ENCODE measurements at regions of chr4 and their contacts with region 1.

Region 1: GRCh38 chr4:103204111-103204510 is 6.0 kb upstream of the CENPE start:
- DNase-seq: peak; percentile 4
- H3K4me3 Mint-ChIP-seq: no peak overlapping the region
- H3K27ac Mint-ChIP-seq: no peak overlapping the region
- H3K4me1 Mint-ChIP-seq: peaks cover 26% of the 10 kb centered on the region
- H3K27me3 Mint-ChIP-seq: no peaks in the 10 kb centered on the region
- CTCF ChIP-seq: no peak

Region 2: GRCh38 chr4:103126126-103126525 is 78.0 kb before region 1 on chr4:
- CTCF ChIA-PET with region 1: no interaction called
- intact Hi-C with region 1: no loop called
- DNase-seq: no peak
- H3K4me3 Mint-ChIP-seq: no peak overlapping the region
- H3K27ac Mint-ChIP-seq: no peak overlapping the region
- H3K4me1 Mint-ChIP-seq: no peaks in the 10 kb centered on the region
- H3K27me3 Mint-ChIP-seq: no peaks in the 10 kb centered on the region
- CTCF ChIP-seq: no peak

Region 3: GRCh38 chr4:103156106-103156505 is 48.0 kb before region 1 on chr4:
- CTCF ChIA-PET with region 1: no interaction called
- intact Hi-C with region 1: no loop called
- DNase-seq: no peak
- H3K4me3 Mint-ChIP-seq: no peak overlapping the region
- H3K27ac Mint-ChIP-seq: no peak overlapping the region
- H3K4me1 Mint-ChIP-seq: no peaks in the 10 kb centered on the region
- H3K27me3 Mint-ChIP-seq: no peaks in the 10 kb centered on the region
- CTCF ChIP-seq: no peak

Region 4: DNA sequence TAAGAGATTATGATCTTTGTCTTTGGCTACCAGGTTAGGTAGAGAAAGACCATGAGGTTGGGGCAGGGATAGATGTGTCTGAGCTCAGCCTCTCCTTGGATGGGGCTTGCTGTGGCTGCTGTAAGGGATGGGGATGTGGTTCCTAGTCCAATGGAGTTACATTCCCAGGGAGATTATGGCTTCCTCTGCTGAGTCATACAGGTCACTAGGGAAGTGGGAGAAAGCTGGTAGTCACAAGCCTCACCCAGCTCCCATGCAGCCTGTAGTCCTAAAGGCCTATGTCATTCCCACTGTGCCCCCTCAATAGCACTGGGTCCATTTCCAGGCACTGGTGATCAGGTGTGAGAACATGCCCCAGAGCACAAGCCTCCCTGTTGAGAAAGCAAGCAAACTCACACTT is 64.6 kb after region 1 on chr4:
- CTCF ChIA-PET with region 1: no interaction called
- intact Hi-C with region 1: no loop called
- DNase-seq: no peak
- H3K4me3 Mint-ChIP-seq: no peak overlapping the region
- H3K27ac Mint-ChIP-seq: no peak overlapping the region
- H3K4me1 Mint-ChIP-seq: no peaks in the 10 kb centered on the region
- H3K27me3 Mint-ChIP-seq: no peaks in the 10 kb centered on the region
- CTCF ChIP-seq: no peak

Region 5: GRCh38 chr4:103306828-103307375 is 102.8 kb after region 1 on chr4:
- CTCF ChIA-PET with region 1: no interaction called
- intact Hi-C with region 1: loop called (anchors 10 kb)
- DNase-seq: peak; percentile 55
- H3K4me3 Mint-ChIP-seq: peak overlapping the region; percentile 26
- H3K27ac Mint-ChIP-seq: no peak overlapping the region
- H3K4me1 Mint-ChIP-seq: peaks cover 33% of the 10 kb centered on the region
- H3K27me3 Mint-ChIP-seq: no peaks in the 10 kb centered on the region
- CTCF ChIP-seq: no peak

Region 6: DNA sequence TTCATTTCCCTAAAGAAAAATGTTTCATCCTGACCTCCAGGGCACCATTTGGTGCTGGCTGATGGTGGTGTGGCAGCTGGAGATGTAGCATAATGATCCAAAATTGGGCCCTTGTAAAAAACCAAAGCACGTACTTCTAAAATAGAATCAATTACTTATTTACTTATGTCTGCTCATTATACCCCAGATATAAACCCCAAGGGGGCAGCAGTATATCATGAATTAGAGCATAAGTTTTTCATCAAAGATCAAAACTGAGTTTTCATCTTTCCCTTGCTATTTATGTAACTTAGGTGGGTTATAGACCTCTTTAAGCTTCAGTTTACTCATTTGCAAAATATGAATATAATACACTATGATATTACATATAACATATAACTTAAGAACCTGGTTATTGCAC is 274.6 kb after region 1 on chr4:
- CTCF ChIA-PET with region 1: no interaction called
- intact Hi-C with region 1: loop called (anchors 10 kb)
- DNase-seq: no peak
- H3K4me3 Mint-ChIP-seq: no peak overlapping the region
- H3K27ac Mint-ChIP-seq: no peak overlapping the region
- H3K4me1 Mint-ChIP-seq: no peaks in the 10 kb centered on the region
- H3K27me3 Mint-ChIP-seq: no peaks in the 10 kb centered on the region
- CTCF ChIP-seq: no peak

Region 7: GRCh38 chr4:103786014-103786413 is 581.9 kb after region 1 on chr4:
- CTCF ChIA-PET with region 1: interaction called, 3 read pairs
- intact Hi-C with region 1: loop called (anchors 1 kb)
- DNase-seq: peak; percentile 2
- H3K4me3 Mint-ChIP-seq: no peak overlapping the region
- H3K27ac Mint-ChIP-seq: no peak overlapping the region
- H3K4me1 Mint-ChIP-seq: no peaks in the 10 kb centered on the region
- H3K27me3 Mint-ChIP-seq: no peaks in the 10 kb centered on the region
- CTCF ChIP-seq: peak; percentile 49

Region 8: DNA sequence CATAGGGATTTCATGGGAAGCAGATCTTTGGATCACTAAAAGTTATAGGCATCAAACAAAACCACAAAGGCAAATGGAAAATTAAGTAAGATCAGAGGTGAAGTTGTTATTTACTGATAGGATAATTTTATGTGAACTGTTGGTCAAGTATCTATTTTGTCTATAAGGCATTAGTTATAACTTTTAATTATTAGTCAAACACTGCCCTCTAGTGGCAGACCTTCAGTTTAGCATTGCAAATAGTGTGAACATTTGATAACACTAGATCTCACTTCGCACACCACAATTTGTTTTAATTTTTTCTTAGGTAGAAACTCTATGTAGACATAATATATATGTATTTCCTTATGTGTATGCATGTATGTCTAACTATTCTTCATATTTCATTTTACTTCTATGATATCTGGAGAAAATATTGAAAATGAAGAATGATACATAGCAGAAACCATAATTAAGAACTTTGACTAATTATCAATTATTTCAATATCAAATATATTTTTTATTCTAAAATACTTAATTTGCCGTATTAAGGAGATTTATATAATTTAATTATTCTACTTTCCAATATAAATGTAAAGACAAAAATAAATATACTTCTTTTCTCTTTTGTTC is 730.2 kb after region 1 on chr4:
- CTCF ChIA-PET with region 1: no interaction called
- intact Hi-C with region 1: loop called (anchors 1 kb)
- DNase-seq: peak; percentile 16
- H3K4me3 Mint-ChIP-seq: no peak overlapping the region
- H3K27ac Mint-ChIP-seq: no peak overlapping the region
- H3K4me1 Mint-ChIP-seq: no peaks in the 10 kb centered on the region
- H3K27me3 Mint-ChIP-seq: no peaks in the 10 kb centered on the region
- CTCF ChIP-seq: no peak

Region 9: GRCh38 chr4:104146048-104146447 is 941.9 kb after region 1 on chr4:
- CTCF ChIA-PET with region 1: no interaction called
- intact Hi-C with region 1: no loop called
- DNase-seq: no peak
- H3K4me3 Mint-ChIP-seq: no peak overlapping the region
- H3K27ac Mint-ChIP-seq: no peak overlapping the region
- H3K4me1 Mint-ChIP-seq: no peaks in the 10 kb centered on the region
- H3K27me3 Mint-ChIP-seq: no peaks in the 10 kb centered on the region
- CTCF ChIP-seq: no peak

Measured in Calu3 (cell line).